PC-3 (cell line): ENCODE measurements at regions of chr5 and their contacts with region 1.

Region 1: GRCh38 chr5:43649256-43649655 is 46.3 kb downstream of the NNT start:
- DNase-seq: no peak
- ATAC-seq: peak; percentile 70
- H3K4me3 ChIP-seq: no peak overlapping the region
- H3K27ac ChIP-seq: no peak overlapping the region
- H3K4me1 ChIP-seq: no peaks in the 10 kb centered on the region
- H3K27me3 ChIP-seq: no peaks in the 10 kb centered on the region
- CTCF ChIP-seq: no peak

Region 2: DNA sequence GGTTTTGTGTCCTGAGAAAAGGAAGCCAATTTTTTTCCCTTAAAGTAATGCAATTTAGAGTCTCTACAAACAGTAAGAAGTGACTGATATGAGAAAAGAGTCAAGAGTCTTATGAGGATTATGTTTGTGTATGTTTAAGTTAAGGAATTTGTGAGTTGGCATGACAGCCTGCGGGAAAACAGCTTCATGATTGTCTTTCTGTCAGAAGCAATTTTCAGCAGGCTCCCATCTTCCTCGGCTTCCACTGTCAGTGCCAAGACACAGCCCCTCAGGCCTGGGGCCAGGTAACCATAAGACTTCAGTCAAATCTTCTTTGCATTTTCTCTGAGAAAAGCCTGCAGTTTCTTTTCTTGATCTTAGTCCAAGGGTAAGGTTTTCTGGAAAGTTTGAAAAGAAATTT is 820.6 kb before region 1 on chr5:
- CTCF ChIA-PET with region 1: no interaction called
- POLR2A ChIA-PET with region 1: no interaction called
- intact Hi-C with region 1: no loop called
- DNase-seq: no peak
- ATAC-seq: no peak
- H3K4me3 ChIP-seq: no peak overlapping the region
- H3K27ac ChIP-seq: no peak overlapping the region
- H3K4me1 ChIP-seq: no peaks in the 10 kb centered on the region
- H3K27me3 ChIP-seq: no peaks in the 10 kb centered on the region
- CTCF ChIP-seq: no peak

Region 3: DNA sequence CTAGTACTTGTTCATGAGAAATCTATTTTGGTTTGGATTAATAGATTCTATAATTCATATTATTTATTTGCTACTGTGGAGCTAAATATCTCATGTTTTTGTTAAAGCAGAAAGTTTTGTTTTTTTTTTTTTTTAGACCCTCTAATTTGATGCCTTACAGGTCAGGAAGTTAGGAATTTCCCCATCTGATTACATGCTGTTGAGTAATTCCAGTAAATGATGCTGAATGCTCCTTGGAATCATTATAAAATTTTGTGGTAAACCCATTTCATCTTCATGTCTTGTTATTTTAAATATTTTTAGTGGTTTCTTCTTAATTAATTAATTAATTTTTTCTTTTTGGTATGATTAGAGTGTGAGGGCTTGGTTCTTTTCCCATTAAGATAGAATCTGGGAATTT is 10.7 kb before region 1 on chr5:
- CTCF ChIA-PET with region 1: interaction called, 3 read pairs
- POLR2A ChIA-PET with region 1: interaction called, 11 read pairs
- intact Hi-C with region 1: no loop called
- DNase-seq: no peak
- ATAC-seq: no peak
- H3K4me3 ChIP-seq: no peak overlapping the region
- H3K27ac ChIP-seq: no peak overlapping the region
- H3K4me1 ChIP-seq: no peaks in the 10 kb centered on the region
- H3K27me3 ChIP-seq: no peaks in the 10 kb centered on the region
- CTCF ChIP-seq: no peak

Region 4: DNA sequence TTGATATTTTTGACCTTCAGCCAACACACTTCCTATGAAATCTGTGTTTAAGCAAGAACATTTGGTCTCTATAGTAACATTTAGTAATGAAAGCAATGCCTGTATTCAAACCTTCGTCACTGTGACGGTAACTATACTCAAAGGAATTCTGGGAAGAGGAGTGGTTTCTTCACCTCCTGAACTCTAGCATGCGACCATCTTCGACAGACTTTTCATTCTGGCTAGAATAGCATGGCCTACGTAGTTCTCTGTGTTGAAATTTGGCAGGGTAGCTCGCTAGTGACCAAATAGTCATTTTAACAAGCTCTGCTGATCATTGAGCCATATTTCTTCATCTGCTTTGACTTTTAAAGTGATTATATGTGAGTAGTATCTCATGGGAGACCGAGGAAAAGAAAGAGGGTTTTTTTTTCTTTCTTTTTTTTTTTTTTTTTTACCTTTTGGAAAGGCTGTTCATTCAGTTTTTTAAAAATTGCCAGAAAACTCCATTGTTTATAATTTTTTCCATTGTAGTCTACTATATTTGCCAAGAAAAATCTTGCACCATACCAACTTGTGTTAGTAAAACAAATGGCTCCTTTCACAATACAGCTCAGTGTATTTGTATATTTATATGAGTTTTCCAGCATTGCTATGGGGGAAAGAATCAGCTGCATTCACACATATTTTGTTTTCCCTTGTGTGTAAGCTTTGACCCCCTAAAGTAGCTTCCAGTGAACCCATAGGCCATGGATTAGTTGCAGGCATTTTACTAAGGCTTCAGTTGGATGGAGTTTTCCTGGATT is 120.5 kb after region 1 on chr5:
- CTCF ChIA-PET with region 1: no interaction called
- POLR2A ChIA-PET with region 1: no interaction called
- intact Hi-C with region 1: no loop called
- DNase-seq: no peak
- ATAC-seq: no peak
- H3K4me3 ChIP-seq: no peak overlapping the region
- H3K27ac ChIP-seq: no peak overlapping the region
- H3K4me1 ChIP-seq: 0 out of 2 replicates have a peak, but pooled peaks cover 5% of the 10 kb centered on the region
- H3K27me3 ChIP-seq: no peaks in the 10 kb centered on the region
- CTCF ChIP-seq: no peak

Region 5: DNA sequence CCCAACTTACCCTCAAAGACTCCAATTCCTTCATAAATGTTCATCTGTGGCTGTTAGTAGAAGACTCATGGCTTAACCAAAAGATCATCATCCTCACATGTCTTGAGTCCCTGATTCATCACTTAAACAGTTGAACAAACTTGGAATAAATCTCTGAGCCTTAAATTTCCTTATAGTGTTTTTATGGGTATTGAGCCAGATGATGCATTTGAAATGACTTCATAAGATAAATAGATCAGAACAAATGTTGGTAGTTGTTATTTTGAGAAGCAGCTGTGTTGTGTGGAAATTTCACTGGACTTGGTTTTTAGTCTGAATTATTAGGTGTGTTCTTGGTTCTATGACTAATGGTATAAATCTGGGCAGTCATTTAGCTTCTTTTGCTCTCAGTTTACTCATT is 190.0 kb after region 1 on chr5:
- CTCF ChIA-PET with region 1: no interaction called
- POLR2A ChIA-PET with region 1: no interaction called
- intact Hi-C with region 1: no loop called
- DNase-seq: peak; percentile 12
- ATAC-seq: no peak
- H3K4me3 ChIP-seq: no peak overlapping the region
- H3K27ac ChIP-seq: no peak overlapping the region
- H3K4me1 ChIP-seq: no peaks in the 10 kb centered on the region
- H3K27me3 ChIP-seq: peaks cover 19% of the 10 kb centered on the region
- CTCF ChIP-seq: no peak